Mammary epithelial cell (primary cell): ENCODE measurements at regions of chr3 and their contacts with region 1.

Region 1: GRCh38 chr3:24640330-24640877 is 145.8 kb upstream of the THRB start:
- DNase-seq: peak; percentile 43
- H3K4me3 ChIP-seq: no peak overlapping the region
- H3K27ac ChIP-seq: no peak overlapping the region
- H3K4me1 ChIP-seq: no peaks in the 10 kb centered on the region
- H3K27me3 ChIP-seq: no peaks in the 10 kb centered on the region
- CTCF ChIP-seq: peak; percentile 68 to 75

Region 2: GRCh38 chr3:23999012-23999641 is 641.3 kb before region 1 on chr3:
- CTCF ChIA-PET with region 1: no interaction called
- dilution Hi-C with region 1: no loop called
- in situ Hi-C with region 1: no loop called
- intact Hi-C with region 1: loop called (anchors 2 kb)
- DNase-seq: peak; percentile 33
- H3K4me3 ChIP-seq: no peak overlapping the region
- H3K27ac ChIP-seq: no peak overlapping the region
- H3K4me1 ChIP-seq: peaks cover under 1% of the 10 kb centered on the region
- H3K27me3 ChIP-seq: no peaks in the 10 kb centered on the region
- CTCF ChIP-seq: peak; percentile 96 to 100

Region 3: GRCh38 chr3:24237971-24238767 is 402.2 kb before region 1 on chr3:
- CTCF ChIA-PET with region 1: no interaction called
- dilution Hi-C with region 1: no loop called
- in situ Hi-C with region 1: no loop called
- intact Hi-C with region 1: loop called (anchors 5 kb)
- DNase-seq: peak; percentile 89
- H3K4me3 ChIP-seq: no peak overlapping the region
- H3K27ac ChIP-seq: peak overlapping the region; percentile 38
- H3K4me1 ChIP-seq: peaks cover 45% of the 10 kb centered on the region
- H3K27me3 ChIP-seq: no peaks in the 10 kb centered on the region
- CTCF ChIP-seq: peak; percentile 62 to 77

Region 4: GRCh38 chr3:24270204-24270691 is 370.2 kb before region 1 on chr3:
- CTCF ChIA-PET with region 1: no interaction called
- dilution Hi-C with region 1: no loop called
- in situ Hi-C with region 1: loop called in 1 of 2 experiments (anchors 5 kb)
- intact Hi-C with region 1: no loop called
- DNase-seq: peak; percentile 6
- H3K4me3 ChIP-seq: no peak overlapping the region
- H3K27ac ChIP-seq: no peak overlapping the region
- H3K4me1 ChIP-seq: peaks cover 10% of the 10 kb centered on the region
- H3K27me3 ChIP-seq: no peaks in the 10 kb centered on the region
- CTCF ChIP-seq: no peak

Region 5: GRCh38 chr3:24475925-24476324 is 164.5 kb before region 1 on chr3:
- CTCF ChIA-PET with region 1: no interaction called
- dilution Hi-C with region 1: no loop called
- in situ Hi-C with region 1: no loop called
- intact Hi-C with region 1: no loop called
- DNase-seq: peak; percentile 93
- H3K4me3 ChIP-seq: no peak overlapping the region
- H3K27ac ChIP-seq: no peak overlapping the region
- H3K4me1 ChIP-seq: peaks cover 37% of the 10 kb centered on the region
- H3K27me3 ChIP-seq: no peaks in the 10 kb centered on the region
- CTCF ChIP-seq: no peak

Region 6: DNA sequence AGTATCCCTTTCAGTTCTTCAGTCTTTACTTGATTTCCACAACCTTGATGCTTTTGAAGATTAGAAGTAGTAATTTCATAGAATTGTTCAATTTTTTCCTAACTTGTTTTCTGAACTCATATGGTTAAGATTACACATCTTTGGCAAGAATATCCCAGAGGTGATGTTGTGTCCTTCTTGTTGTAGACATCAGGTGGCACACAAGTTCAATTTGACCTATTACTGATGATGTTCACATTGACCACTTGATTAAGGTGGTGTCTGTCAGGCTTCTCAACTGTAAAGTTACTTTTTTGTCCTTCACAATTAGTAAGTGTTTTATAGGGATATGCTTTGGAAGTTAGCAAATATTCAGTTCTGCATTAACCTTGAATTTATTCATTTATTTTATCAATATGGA is 111.2 kb before region 1 on chr3:
- CTCF ChIA-PET with region 1: no interaction called
- dilution Hi-C with region 1: no loop called
- in situ Hi-C with region 1: no loop called
- intact Hi-C with region 1: loop called (anchors 1 kb)
- DNase-seq: no peak
- H3K4me3 ChIP-seq: no peak overlapping the region
- H3K27ac ChIP-seq: no peak overlapping the region
- H3K4me1 ChIP-seq: peaks cover 12% of the 10 kb centered on the region
- H3K27me3 ChIP-seq: no peaks in the 10 kb centered on the region
- CTCF ChIP-seq: peak in 1 of 2 donors; percentile 19

Region 7: DNA sequence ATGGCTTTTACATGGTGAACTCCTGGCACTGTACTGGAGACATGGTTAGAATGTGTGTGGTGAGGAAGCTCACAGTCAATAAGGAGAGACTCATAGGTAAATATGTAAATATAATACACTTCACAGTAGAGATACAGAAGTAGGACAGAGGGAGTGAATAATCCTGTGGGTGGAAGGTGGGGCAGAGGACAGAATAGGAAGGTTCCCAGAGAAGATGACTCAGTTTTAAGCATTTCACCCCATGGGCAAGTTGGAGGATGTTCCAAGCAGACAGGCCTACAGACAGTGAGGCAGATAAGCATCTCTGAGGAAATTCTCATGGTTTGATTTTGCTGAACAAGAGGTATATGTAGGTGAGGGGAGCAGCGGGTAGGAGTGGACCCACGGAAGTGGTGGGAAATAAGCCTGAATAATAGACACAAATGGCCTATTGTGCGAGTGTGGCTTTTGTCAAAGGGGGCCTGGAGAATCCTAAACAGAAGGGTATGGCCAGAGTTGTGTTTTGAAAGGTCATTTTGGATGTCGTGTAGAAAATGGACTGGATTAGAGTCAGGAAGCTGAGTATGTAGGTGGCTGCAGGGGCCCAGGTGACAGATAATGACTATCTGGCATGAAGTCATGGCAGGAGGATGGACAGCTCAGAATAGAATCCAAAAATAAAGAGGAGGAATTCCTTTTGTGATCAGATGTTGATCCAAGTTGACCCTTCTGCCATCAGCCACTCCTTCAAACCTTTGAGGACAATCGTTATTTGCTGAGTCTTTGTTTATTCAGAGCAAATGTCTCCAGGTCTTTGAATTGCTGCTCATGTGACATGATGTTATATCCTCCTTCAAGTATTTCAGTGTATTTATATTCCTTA is 48.5 kb before region 1 on chr3:
- CTCF ChIA-PET with region 1: no interaction called
- dilution Hi-C with region 1: no loop called
- in situ Hi-C with region 1: no loop called
- intact Hi-C with region 1: loop called (anchors 2 kb)
- DNase-seq: peak; percentile 99
- H3K4me3 ChIP-seq: no peak overlapping the region
- H3K27ac ChIP-seq: peak overlapping the region; percentile 87
- H3K4me1 ChIP-seq: peaks cover 43% of the 10 kb centered on the region
- H3K27me3 ChIP-seq: no peaks in the 10 kb centered on the region
- CTCF ChIP-seq: no peak

Region 8: GRCh38 chr3:24740326-24740725 is 99.9 kb after region 1 on chr3:
- CTCF ChIA-PET with region 1: no interaction called
- dilution Hi-C with region 1: no loop called
- in situ Hi-C with region 1: no loop called
- intact Hi-C with region 1: no loop called
- DNase-seq: no peak
- H3K4me3 ChIP-seq: no peak overlapping the region
- H3K27ac ChIP-seq: no peak overlapping the region
- H3K4me1 ChIP-seq: no peaks in the 10 kb centered on the region
- H3K27me3 ChIP-seq: no peaks in the 10 kb centered on the region
- CTCF ChIP-seq: no peak